Activated CD4-positive, alpha-beta T cell treated with anti-CD3 and anti-CD28 coated beads, Interleukin-2, amount 10 ng/mL, durations not matched to agents 7 days and 5 days (primary cell): ENCODE measurements at regions of chr9 and their contacts with region 1.

Region 1: GRCh38 chr9:112162621-112163413 is 12.3 kb downstream of the SUSD1 start:
- DNase-seq: no peak
- H3K4me3 Mint-ChIP-seq: no peak overlapping the region
- H3K27ac Mint-ChIP-seq: no peak overlapping the region
- H3K4me1 Mint-ChIP-seq: peaks cover 9% of the 10 kb centered on the region
- H3K27me3 Mint-ChIP-seq: no peaks in the 10 kb centered on the region

Region 2: DNA sequence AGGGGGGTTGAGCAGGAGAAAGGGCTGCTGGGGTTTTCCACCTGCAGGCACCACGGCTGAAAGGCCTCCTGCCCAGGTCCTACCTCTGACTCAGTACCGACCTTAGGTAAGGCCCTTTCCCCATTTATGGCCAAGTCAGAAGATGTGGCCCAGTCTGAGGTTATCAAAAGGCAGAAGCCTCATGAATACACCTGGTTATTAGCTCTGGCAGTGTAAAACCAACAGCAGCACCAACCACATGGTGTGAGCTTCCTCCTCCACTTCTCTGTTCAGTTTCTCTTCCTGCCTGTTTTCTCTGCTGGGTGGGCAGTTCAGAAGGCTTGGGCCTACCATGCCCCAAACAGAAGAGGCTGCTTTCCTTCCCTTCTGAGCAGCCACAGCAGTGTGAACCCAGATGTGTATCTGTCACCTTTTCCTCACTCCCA is 179.3 kb before region 1 on chr9:
- CTCF ChIA-PET with region 1: no interaction called
- POLR2A ChIA-PET with region 1: no interaction called
- DNase-seq: no peak
- H3K4me3 Mint-ChIP-seq: no peak overlapping the region
- H3K27ac Mint-ChIP-seq: no peak overlapping the region
- H3K4me1 Mint-ChIP-seq: peaks cover 35% of the 10 kb centered on the region
- H3K27me3 Mint-ChIP-seq: peaks cover 6% of the 10 kb centered on the region

Region 3: DNA sequence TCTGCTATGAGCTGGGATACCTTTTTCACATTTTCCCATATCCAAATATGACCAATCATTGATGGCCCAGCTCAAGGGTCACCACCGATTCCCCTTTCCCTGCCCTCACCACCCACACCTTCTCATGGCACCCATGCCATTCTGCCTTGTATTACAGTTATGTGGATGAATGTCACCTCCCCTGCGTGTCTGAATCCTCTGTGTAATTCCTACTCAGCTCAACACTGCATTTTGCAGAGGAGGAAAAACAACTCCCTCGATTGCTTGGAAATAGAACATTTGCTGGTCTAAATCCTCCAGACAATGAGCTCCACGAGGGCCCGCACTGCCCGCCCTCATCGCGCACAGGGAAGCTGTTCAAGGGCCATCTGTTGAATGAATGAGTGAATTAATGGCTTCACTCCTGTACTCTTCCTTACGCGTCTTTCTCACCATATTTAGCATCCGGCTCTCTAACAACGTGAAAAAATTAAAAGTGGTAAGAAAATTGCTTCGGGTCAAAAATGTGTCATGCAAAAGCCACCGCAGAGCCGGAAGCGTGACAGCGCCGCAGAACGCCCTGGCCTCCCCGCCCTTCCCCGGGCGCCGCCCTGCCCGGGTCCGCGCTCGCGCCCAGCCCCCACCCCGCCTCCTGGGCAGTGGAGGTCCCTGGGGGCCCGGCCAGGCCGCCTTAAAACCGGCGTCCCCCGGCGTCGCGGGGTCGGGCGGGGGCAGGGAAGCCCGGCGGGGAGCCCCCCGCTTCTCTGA is 11.6 kb after region 1 on chr9:
- CTCF ChIA-PET with region 1: interaction called, 13 read pairs
- POLR2A ChIA-PET with region 1: no interaction called
- DNase-seq: peak; percentile 82
- H3K4me3 Mint-ChIP-seq: peak overlapping the region; percentile 88
- H3K27ac Mint-ChIP-seq: peak overlapping the region; percentile 97
- H3K4me1 Mint-ChIP-seq: peaks cover 78% of the 10 kb centered on the region
- H3K27me3 Mint-ChIP-seq: peaks cover 14% of the 10 kb centered on the region

Region 4: DNA sequence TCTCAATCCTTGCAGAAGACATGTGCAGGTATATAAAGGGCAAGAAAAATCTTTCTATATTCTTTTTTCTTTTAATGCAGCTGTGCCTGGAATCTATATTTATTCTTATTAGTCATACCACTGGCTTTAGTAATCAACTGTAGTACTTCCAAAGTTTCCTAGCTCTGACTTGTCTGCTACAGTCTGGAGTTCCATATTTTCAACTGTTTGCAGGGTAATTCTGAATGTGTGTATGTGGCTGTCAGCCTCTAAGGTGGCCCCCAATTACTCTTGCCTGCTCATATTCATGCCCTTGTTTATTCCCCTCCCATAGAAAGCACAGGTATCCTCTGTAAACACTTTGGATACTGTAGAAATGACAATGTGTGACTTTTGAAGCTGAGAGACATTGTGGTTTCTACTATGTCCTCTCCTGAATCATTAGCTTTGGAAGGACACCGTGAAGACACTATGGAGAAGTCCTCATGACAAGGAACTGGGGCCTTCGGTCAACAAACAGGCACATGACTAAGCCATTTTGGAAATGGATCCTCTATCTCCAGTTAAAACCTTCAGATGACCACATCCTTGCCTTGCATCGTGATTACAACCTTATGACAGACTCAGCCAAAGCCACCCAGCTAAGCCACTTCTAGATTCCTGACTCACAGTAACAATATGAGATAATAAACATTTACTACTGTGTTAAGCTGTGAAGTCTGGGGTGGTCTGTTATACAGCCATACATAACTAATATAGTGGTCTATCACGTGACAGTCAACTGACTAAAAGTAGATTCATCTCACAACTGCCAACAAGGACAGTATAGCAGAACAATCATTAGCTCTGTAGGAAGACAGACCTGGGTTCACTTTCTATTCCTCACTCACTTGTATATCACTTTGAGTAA is 61.8 kb after region 1 on chr9:
- CTCF ChIA-PET with region 1: no interaction called
- POLR2A ChIA-PET with region 1: no interaction called
- DNase-seq: no peak
- H3K4me3 Mint-ChIP-seq: no peak overlapping the region
- H3K27ac Mint-ChIP-seq: no peak overlapping the region
- H3K4me1 Mint-ChIP-seq: peaks cover 5% of the 10 kb centered on the region
- H3K27me3 Mint-ChIP-seq: no peaks in the 10 kb centered on the region

Region 5: GRCh38 chr9:113143541-113144244 is 980.9 kb after region 1 on chr9:
- CTCF ChIA-PET with region 1: no interaction called
- POLR2A ChIA-PET with region 1: interaction called, 12 read pairs
- DNase-seq: no peak
- H3K4me3 Mint-ChIP-seq: no peak overlapping the region
- H3K27ac Mint-ChIP-seq: no peak overlapping the region
- H3K4me1 Mint-ChIP-seq: no peaks in the 10 kb centered on the region
- H3K27me3 Mint-ChIP-seq: peaks cover 23% of the 10 kb centered on the region